A673 (cell line): ENCODE measurements at regions of chr2 and their contacts with region 1.

Region 1: GRCh38 chr2:139403948-139404347 is 623.8 kb upstream of the NXPH2 start:
- DNase-seq: peak; percentile 12
- H3K4me3 ChIP-seq: no peak overlapping the region
- H3K27ac ChIP-seq: no peak overlapping the region
- H3K4me1 ChIP-seq: no peaks in the 10 kb centered on the region
- H3K27me3 ChIP-seq: no peaks in the 10 kb centered on the region
- CTCF ChIP-seq: no peak

Region 2: DNA sequence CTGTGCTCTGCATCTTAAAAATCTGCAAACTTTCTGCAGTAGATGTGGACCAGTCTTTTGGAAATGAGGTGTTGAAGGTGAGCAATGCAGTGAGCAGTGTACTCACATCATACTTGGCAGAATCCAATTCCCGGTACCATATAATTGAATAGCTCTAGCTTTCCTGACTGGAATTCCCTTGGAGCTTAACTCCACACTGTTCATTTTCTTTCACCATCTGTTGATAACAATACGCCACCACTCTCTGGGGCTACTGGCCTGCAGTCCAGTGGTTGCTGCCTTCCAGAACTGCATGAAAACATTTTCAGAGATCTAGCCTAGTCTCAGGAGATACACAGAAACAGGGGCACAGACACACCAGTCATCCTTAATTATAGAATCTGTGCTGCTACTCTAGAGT is 196.2 kb after region 1 on chr2:
- CTCF ChIA-PET with region 1: interaction called, 11 read pairs
- POLR2A ChIA-PET with region 1: no interaction called
- intact Hi-C with region 1: no loop called
- DNase-seq: no peak
- H3K4me3 ChIP-seq: no peak overlapping the region
- H3K27ac ChIP-seq: no peak overlapping the region
- H3K4me1 ChIP-seq: no peaks in the 10 kb centered on the region
- H3K27me3 ChIP-seq: no peaks in the 10 kb centered on the region
- CTCF ChIP-seq: no peak

Region 3: GRCh38 chr2:140247451-140248195 is 843.7 kb after region 1 on chr2:
- CTCF ChIA-PET with region 1: no interaction called
- POLR2A ChIA-PET with region 1: no interaction called
- intact Hi-C with region 1: no loop called
- DNase-seq: peak; percentile 15
- H3K4me3 ChIP-seq: no peak overlapping the region
- H3K27ac ChIP-seq: no peak overlapping the region
- H3K4me1 ChIP-seq: peaks cover 8% of the 10 kb centered on the region
- H3K27me3 ChIP-seq: no peaks in the 10 kb centered on the region
- CTCF ChIP-seq: no peak